ENCODE measurements at regions of chr18 and their contacts with region 1.

Region 1: DNA sequence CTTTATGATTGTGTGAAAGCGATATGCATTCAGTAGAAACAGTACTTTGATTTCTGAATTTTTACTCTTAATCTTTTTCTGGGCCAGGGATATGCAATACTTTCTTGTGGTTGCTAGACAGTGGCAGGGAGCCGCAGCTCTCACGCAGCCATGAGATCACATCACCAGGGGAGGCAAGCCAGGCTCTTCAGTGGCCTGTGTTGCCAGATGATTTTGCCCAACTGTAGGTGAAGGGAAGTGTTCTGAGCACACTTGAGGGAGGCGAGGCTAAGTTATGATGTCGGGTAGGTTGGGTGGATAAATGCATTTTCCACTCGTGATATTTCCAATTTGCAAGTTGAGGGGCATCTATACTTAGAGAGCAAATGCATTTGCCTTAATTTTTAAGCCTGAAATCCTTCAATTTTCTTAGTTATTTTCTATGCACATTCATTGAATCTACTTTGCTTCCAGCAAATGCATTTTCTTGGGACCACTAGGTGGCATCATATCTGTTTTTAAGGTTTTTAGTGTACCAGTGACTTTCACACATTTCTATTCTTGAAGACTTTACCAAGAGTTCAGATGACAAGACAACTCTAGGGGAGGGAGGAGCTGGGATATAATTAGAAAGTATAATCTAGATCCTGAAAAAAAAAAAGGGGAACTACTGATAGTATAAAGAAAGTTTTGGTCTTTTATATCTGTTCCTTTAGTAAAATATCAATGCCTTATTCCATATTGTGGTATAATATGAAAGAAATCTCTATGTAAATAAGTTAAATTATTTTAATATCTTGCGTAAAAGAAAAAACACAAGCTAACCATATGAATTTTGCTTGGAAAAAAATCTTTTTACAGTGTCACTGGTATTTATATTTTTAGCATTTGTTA is 643.3 kb downstream of the SOCS6 start:
- DNase-seq: no peak
- ATAC-seq: no peak

Region 2: GRCh38 chr18:72544092-72544886 is 1612.1 kb after region 1 on chr18 and contains the start of gene CBLN2:
- intact Hi-C with region 1: loop called in 1 of 2 experiments (anchors 10 kb)
- DNase-seq: peak in 1 of 2 donors; percentile 39
- ATAC-seq: peak; percentile 71
- total RNA-seq, gene CBLN2: 0.40 to 1.1 TPM